ENCODE measurements at regions of chr16 and their contacts with region 1.

Region 1: DNA sequence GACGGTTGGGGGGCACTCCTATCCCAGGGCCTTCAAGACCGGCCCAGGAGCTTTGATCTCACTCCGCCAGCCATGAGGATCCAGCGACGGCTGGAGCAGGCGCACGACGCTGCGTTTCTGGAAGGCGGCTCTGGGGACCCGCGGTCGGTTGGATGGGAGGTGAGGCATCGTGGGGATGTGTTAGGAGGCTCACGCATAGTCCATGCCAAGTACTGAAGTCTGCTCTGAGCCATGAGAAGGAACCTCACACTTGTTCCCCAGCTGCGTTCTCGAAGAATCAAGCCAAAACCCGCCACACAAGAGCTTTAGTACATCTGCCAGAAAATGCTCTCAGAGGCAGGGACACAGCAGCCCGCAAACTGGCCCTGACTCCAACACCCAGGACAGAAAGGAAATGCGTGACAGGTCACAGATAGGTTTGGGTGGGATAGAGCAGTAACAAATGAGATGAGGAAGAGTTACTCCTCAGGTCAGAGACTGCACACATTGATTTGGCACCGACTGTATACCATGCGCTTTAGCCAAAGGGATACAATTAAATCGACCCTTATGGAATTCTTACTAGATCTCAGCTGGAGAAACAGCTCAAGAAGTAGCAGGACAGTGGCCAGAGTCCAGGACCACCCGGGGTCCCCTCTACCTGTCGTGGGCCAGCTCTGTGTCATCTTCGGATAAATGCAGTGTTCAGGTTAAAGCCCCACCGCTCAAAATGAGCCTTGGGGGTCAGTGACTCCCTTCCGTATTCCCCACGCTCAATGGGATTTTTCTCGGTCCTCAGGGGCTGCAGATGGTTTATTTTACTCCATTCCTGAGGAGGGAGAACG is 6.7 kb upstream of the GSG1L start:
- DNase-seq: no peak
- H3K4me3 ChIP-seq: no peak overlapping the region
- H3K4me3 Mint-ChIP-seq: no peak overlapping the region
- H3K27ac Mint-ChIP-seq: no peak overlapping the region
- H3K4me1 ChIP-seq: no peaks in the 10 kb centered on the region
- H3K4me1 Mint-ChIP-seq: no peaks in the 10 kb centered on the region
- H3K27me3 ChIP-seq: no peaks in the 10 kb centered on the region
- H3K27me3 Mint-ChIP-seq: peaks cover 6% of the 10 kb centered on the region
- CTCF ChIP-seq: no peak

Region 2: GRCh38 chr16:27639561-27640276 is 430.5 kb before region 1 on chr16:
- CTCF ChIA-PET with region 1: interaction called, 5 read pairs
- POLR2A ChIA-PET with region 1: no interaction called
- intact Hi-C with region 1: loop called (anchors 1 kb)
- DNase-seq: peak in 1 of 2 experiments; percentile 52
- H3K4me3 ChIP-seq: no peak overlapping the region
- H3K4me3 Mint-ChIP-seq: no peak overlapping the region
- H3K27ac Mint-ChIP-seq: no peak overlapping the region
- H3K4me1 ChIP-seq: no peaks in the 10 kb centered on the region
- H3K4me1 Mint-ChIP-seq: no peaks in the 10 kb centered on the region
- H3K27me3 ChIP-seq: no peaks in the 10 kb centered on the region
- H3K27me3 Mint-ChIP-seq: no peaks in the 10 kb centered on the region
- CTCF ChIP-seq: peak; percentile 63 to 65

Region 3: DNA sequence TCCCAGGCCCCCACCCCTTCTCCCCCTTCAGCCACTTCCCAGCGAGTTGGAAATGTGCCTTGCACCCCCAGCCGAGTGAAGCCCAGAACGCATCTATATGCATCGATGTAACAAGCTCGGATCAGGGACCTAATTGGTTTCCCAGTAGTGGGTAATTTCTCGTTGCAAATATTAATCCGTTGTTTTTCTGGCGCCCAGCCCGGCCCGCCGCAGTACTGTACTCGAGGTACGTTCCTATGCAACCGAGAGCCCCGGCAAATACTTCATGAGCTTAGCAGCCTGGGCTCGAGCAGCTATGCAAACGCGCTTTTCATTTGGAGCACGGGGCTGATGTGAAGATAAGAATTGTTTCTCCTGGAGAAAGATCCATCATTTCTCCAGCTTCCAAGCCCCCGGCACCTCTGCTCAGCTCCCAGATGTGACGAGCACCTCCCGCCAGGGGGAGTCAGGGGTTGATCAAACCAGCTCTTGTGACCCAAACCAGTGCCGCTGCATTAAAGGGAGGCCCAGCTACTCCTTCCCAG is 290.5 kb before region 1 on chr16:
- CTCF ChIA-PET with region 1: interaction called, 12 read pairs
- POLR2A ChIA-PET with region 1: no interaction called
- intact Hi-C with region 1: no loop called
- DNase-seq: peak; percentile 60 to 64
- H3K4me3 ChIP-seq: no peak overlapping the region
- H3K4me3 Mint-ChIP-seq: no peak overlapping the region
- H3K27ac Mint-ChIP-seq: no peak overlapping the region
- H3K4me1 ChIP-seq: no peaks in the 10 kb centered on the region
- H3K4me1 Mint-ChIP-seq: no peaks in the 10 kb centered on the region
- H3K27me3 ChIP-seq: no peaks in the 10 kb centered on the region
- H3K27me3 Mint-ChIP-seq: no peaks in the 10 kb centered on the region
- CTCF ChIP-seq: peak; percentile 34 to 63

Region 4: DNA sequence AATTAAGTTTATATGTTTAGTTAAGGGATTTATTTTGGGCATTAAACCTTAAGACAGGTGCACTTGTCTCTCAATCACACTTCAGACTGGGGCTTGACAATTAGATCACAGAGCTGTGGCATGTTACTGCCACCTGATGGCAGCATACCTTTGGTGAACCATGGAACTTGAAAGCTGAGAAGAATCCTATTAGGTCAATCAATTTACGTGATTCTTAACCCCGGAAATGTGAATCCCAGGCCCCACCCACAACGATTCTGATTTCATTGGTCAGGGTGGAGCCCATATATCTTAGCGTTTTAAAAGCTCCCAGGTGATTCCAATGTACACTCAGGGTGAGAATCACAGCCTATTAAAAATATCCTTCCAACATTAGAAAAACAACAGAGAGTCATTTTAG is 97.7 kb before region 1 on chr16:
- CTCF ChIA-PET with region 1: interaction called, 23 read pairs
- POLR2A ChIA-PET with region 1: no interaction called
- intact Hi-C with region 1: loop called (anchors 1 kb)
- DNase-seq: peak; percentile 38 to 40
- H3K4me3 ChIP-seq: no peak overlapping the region
- H3K4me3 Mint-ChIP-seq: no peak overlapping the region
- H3K27ac Mint-ChIP-seq: no peak overlapping the region
- H3K4me1 ChIP-seq: no peaks in the 10 kb centered on the region
- H3K4me1 Mint-ChIP-seq: no peaks in the 10 kb centered on the region
- H3K27me3 ChIP-seq: no peaks in the 10 kb centered on the region; the same call in 1 of the 2 replicates
- H3K27me3 Mint-ChIP-seq: no peaks in the 10 kb centered on the region
- CTCF ChIP-seq: peak; percentile 45 to 68